ENCODE measurements at regions of chr22 and their contacts with region 1.

Region 1: GRCh38 chr22:22884888-22885840 is 2.5 kb upstream of the IGLL5 start:
- DNase-seq: peak; percentile 25
- H3K4me3 Mint-ChIP-seq: no peak overlapping the region
- H3K27ac Mint-ChIP-seq: peak overlapping the region; percentile 57
- H3K4me1 Mint-ChIP-seq: peaks cover 12% of the 10 kb centered on the region
- H3K27me3 Mint-ChIP-seq: peaks cover 27% of the 10 kb centered on the region

Region 2: GRCh38 chr22:22787786-22788459 is 97.2 kb before region 1 on chr22:
- intact Hi-C with region 1: loop called (anchors 2 kb)
- DNase-seq: peak; percentile 55
- H3K4me3 Mint-ChIP-seq: no peak overlapping the region
- H3K27ac Mint-ChIP-seq: no peak overlapping the region
- H3K4me1 Mint-ChIP-seq: peaks cover 6% of the 10 kb centered on the region
- H3K27me3 Mint-ChIP-seq: peaks cover 10% of the 10 kb centered on the region

Region 3: GRCh38 chr22:22935546-22936157 is 50.5 kb after region 1 on chr22:
- intact Hi-C with region 1: loop called (anchors 5 kb)
- DNase-seq: no peak
- H3K4me3 Mint-ChIP-seq: no peak overlapping the region
- H3K27ac Mint-ChIP-seq: no peak overlapping the region
- H3K4me1 Mint-ChIP-seq: peaks cover 21% of the 10 kb centered on the region
- H3K27me3 Mint-ChIP-seq: peaks cover 13% of the 10 kb centered on the region